B cell (primary cell): ENCODE measurements at regions of chr14 and their contacts with region 1.

Region 1: DNA sequence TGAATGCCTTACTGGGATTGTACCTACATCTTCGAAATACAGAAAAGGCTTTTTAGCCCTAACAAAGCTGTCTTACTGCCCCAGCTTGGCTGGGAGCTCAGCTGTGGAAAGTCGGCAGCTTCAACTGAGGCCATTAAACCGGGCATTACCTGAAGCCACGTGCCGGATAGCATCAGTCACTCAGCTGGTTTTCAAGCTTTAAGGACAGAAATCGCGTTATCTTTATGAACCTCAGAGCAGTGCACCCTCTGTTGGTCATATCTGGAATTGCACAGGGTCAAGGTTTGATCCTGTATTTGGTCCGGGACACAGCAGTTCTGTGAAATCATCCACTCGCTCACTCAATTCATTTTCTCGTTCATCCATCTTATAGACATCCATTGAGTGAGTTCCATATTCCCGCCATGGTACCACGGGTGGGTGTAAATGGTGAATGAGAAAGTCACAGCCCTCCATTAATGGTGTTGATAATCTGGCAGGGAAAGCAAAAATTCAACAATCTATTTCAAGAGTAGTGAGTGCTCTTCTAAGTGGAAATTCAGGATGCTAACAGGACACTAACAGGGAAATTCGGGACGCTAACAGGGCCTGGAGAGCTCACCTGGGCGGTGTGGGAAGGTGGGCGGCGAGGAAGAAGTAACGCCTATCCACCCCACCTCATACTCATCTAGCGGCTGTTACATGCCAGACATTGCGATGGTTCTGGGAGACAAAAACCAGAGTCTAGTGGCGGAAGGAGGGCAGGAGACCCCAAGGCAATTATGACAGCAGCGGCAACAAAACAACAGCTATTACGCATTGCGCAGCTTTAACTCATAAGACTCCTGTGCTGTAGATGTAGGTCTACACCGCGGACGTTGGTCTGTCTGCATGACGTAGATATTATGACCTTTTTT is 60.6 kb upstream of the TCL1A start:
- DNase-seq: peak; percentile 78
- ATAC-seq: peak; percentile 68
- H3K4me3 ChIP-seq: no peak overlapping the region
- H3K4me3 Mint-ChIP-seq: no peak overlapping the region
- H3K27ac ChIP-seq: no peak overlapping the region
- H3K27ac Mint-ChIP-seq: no peak overlapping the region
- H3K4me1 ChIP-seq: peaks cover 7 to 16% of the 10 kb centered on the region in 2 donors
- H3K4me1 Mint-ChIP-seq: peaks cover 24% of the 10 kb centered on the region
- H3K27me3 ChIP-seq: no peaks in the 10 kb centered on the region
- H3K27me3 Mint-ChIP-seq: peaks cover 10% of the 10 kb centered on the region
- CTCF ChIP-seq: peak; percentile 95

Region 2: DNA sequence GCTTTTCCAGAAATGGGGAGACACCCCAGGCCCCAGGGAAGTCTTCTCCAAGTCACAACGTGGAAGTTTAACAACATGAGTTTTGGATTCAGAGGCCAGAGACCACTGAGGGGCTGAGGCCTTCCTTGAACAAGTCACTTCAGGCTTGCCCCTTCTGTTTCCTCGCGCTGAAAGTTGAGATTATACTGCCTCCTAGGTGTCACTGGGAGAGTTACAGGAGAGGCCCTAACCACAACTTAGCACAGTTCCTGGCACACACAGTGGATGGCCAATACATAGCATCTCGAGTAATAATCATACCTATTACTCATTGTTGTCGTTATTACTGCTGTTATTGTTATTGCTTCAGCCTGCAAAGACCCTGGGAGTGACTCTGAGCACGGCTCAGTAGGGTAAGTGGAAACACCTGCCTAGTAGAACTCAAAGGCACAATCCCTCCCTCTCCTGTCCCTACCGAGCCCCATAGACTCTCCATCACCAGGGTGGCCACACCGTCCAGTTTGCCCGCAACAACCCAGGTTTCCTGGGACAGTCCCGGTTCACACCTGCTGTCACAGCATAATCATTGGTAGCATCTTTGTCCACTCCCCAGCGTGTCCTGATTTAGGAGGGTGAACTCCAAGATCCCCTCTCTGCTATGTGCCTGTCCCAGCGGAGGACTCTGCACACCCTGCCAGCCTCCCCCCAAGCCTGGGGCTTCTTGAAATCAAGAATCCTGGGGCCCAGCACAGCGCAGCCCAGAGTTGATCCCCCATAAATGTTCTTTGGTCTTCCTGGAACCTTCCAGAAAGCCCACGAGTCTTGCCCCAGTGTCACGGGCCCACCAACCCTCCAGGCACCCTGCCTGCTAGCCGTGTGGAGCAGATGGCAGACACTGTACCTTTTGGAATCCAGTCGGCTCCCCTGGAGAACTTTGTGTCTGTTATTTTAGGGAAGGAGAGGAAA is 343.0 kb before region 1 on chr14:
- CTCF ChIA-PET with region 1: interaction called, 15 read pairs
- POLR2A ChIA-PET with region 1: no interaction called
- intact Hi-C with region 1: loop called (anchors 1 kb)
- DNase-seq: peak; percentile 48
- ATAC-seq: no peak
- H3K4me3 ChIP-seq: no peak overlapping the region
- H3K4me3 Mint-ChIP-seq: no peak overlapping the region
- H3K27ac ChIP-seq: no peak overlapping the region
- H3K27ac Mint-ChIP-seq: no peak overlapping the region
- H3K4me1 ChIP-seq: peaks cover 0 to 3% of the 10 kb centered on the region in 2 donors
- H3K4me1 Mint-ChIP-seq: peaks cover 7% of the 10 kb centered on the region
- H3K27me3 ChIP-seq: no peaks in the 10 kb centered on the region
- H3K27me3 Mint-ChIP-seq: no peaks in the 10 kb centered on the region
- CTCF ChIP-seq: peak; percentile 53

Region 3: GRCh38 chr14:95483309-95484165 is 291.0 kb before region 1 on chr14:
- CTCF ChIA-PET with region 1: no interaction called
- POLR2A ChIA-PET with region 1: no interaction called
- intact Hi-C with region 1: no loop called
- DNase-seq: no peak
- ATAC-seq: no peak
- H3K4me3 ChIP-seq: no peak overlapping the region
- H3K4me3 Mint-ChIP-seq: no peak overlapping the region
- H3K27ac ChIP-seq: no peak overlapping the region
- H3K27ac Mint-ChIP-seq: peak overlapping the region; percentile 59
- H3K4me1 ChIP-seq: peaks cover 64 to 87% of the 10 kb centered on the region in 2 donors
- H3K4me1 Mint-ChIP-seq: peaks cover 80% of the 10 kb centered on the region
- H3K27me3 ChIP-seq: no peaks in the 10 kb centered on the region
- H3K27me3 Mint-ChIP-seq: no peaks in the 10 kb centered on the region
- CTCF ChIP-seq: no peak

Region 4: GRCh38 chr14:95609387-95609990 is 165.0 kb before region 1 on chr14:
- CTCF ChIA-PET with region 1: interaction called, 72 read pairs
- POLR2A ChIA-PET with region 1: interaction called, 3 read pairs
- intact Hi-C with region 1: loop called (anchors 1 kb)
- DNase-seq: peak; percentile 52
- ATAC-seq: no peak
- H3K4me3 ChIP-seq: no peak overlapping the region
- H3K4me3 Mint-ChIP-seq: no peak overlapping the region
- H3K27ac ChIP-seq: no peak overlapping the region
- H3K27ac Mint-ChIP-seq: no peak overlapping the region
- H3K4me1 ChIP-seq: peaks cover 13 to 29% of the 10 kb centered on the region in 2 donors
- H3K4me1 Mint-ChIP-seq: peaks cover 31% of the 10 kb centered on the region
- H3K27me3 ChIP-seq: peaks cover 0 to 10% (median 3%) of the 10 kb centered on the region in 4 experiments
- H3K27me3 Mint-ChIP-seq: peaks cover 45% of the 10 kb centered on the region
- CTCF ChIP-seq: peak; percentile 51

Region 5: GRCh38 chr14:95697764-95698163 is 76.7 kb before region 1 on chr14:
- CTCF ChIA-PET with region 1: interaction called, 15 read pairs
- POLR2A ChIA-PET with region 1: no interaction called
- intact Hi-C with region 1: no loop called
- DNase-seq: peak; percentile 76
- ATAC-seq: peak; percentile 64
- H3K4me3 ChIP-seq: peak overlapping the region in 3 of 5 experiments; percentile 9 to 56 (median 16)
- H3K4me3 Mint-ChIP-seq: peak overlapping the region; percentile 81
- H3K27ac ChIP-seq: peak overlapping the region; percentile 87 to 94
- H3K27ac Mint-ChIP-seq: peak overlapping the region; percentile 95
- H3K4me1 ChIP-seq: peaks cover 100% of the 10 kb centered on the region in 2 donors
- H3K4me1 Mint-ChIP-seq: peaks cover 83% of the 10 kb centered on the region
- H3K27me3 ChIP-seq: no peaks in the 10 kb centered on the region
- H3K27me3 Mint-ChIP-seq: peaks cover 34% of the 10 kb centered on the region
- CTCF ChIP-seq: peak; percentile 19

Region 6: DNA sequence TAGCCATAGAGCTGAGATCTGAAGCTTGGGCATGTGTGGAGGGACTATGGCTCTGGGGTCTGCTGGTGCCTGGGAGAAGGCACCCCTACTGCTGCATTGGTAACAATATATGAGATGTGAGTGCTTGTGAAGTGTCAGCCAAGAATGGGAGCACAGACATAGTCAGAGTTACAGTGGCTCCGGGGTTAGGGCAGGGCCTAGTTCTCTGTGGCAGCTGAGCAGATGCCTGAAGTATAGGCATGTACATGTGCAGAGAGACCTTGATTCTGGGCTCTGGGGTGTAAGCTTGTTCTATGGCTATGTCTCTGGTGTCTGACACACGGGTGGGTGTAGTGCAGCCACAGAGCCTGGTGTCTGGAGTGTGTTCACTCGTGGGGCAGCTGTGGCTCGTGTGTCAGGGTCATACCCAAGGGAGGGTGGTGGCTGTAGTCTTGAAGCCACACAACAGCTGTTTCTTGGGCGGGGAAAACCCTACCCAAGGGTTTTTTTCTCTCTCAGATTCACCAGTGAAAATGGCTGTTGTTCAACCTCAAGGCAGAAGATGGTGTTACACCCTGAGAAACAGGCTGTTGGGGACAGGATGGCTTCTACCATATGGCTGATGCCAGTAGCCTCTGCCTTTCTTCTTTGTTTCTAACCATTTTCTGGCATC is 48.7 kb before region 1 on chr14:
- CTCF ChIA-PET with region 1: interaction called, 33 read pairs
- POLR2A ChIA-PET with region 1: no interaction called
- intact Hi-C with region 1: loop called (anchors 1 kb)
- DNase-seq: peak; percentile 78
- ATAC-seq: peak; percentile 91
- H3K4me3 ChIP-seq: peak overlapping the region in 4 of 5 experiments; percentile 3 to 45 (median 32)
- H3K4me3 Mint-ChIP-seq: peak overlapping the region; percentile 68
- H3K27ac ChIP-seq: peak overlapping the region; percentile 59 to 74
- H3K27ac Mint-ChIP-seq: peak overlapping the region; percentile 90
- H3K4me1 ChIP-seq: peaks cover 66 to 69% of the 10 kb centered on the region in 2 donors
- H3K4me1 Mint-ChIP-seq: peaks cover 67% of the 10 kb centered on the region
- H3K27me3 ChIP-seq: no peaks in the 10 kb centered on the region
- H3K27me3 Mint-ChIP-seq: peaks cover 30% of the 10 kb centered on the region
- CTCF ChIP-seq: no peak

Region 7: DNA sequence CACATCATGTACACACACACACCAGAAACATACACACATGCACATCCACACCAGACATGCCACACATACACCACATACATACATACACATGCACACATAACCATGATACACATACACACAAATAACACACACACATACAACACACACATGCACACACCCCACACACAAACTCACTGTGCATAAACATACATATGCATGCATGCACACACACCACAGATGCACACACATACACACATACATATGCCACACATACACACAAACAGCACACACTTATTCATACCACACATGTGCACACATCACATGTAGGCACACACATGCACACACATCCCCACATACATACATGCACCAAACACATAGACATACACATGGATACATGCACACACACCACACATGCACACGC is 197.7 kb after region 1 on chr14:
- CTCF ChIA-PET with region 1: no interaction called
- POLR2A ChIA-PET with region 1: no interaction called
- intact Hi-C with region 1: no loop called
- DNase-seq: no peak
- ATAC-seq: no peak
- H3K4me3 ChIP-seq: no peak overlapping the region
- H3K4me3 Mint-ChIP-seq: no peak overlapping the region
- H3K27ac ChIP-seq: no peak overlapping the region
- H3K27ac Mint-ChIP-seq: no peak overlapping the region
- H3K4me1 ChIP-seq: no peaks in the 10 kb centered on the region
- H3K4me1 Mint-ChIP-seq: no peaks in the 10 kb centered on the region
- H3K27me3 ChIP-seq: peaks cover 0 to 3% (median 0%) of the 10 kb centered on the region in 4 experiments
- H3K27me3 Mint-ChIP-seq: peaks cover 32% of the 10 kb centered on the region
- CTCF ChIP-seq: no peak

Region 8: GRCh38 chr14:95993768-95994592 is 219.5 kb after region 1 on chr14:
- CTCF ChIA-PET with region 1: interaction called, 12 read pairs
- POLR2A ChIA-PET with region 1: no interaction called
- intact Hi-C with region 1: loop called (anchors 2 kb)
- DNase-seq: peak; percentile 72
- ATAC-seq: no peak
- H3K4me3 ChIP-seq: no peak overlapping the region
- H3K4me3 Mint-ChIP-seq: no peak overlapping the region
- H3K27ac ChIP-seq: no peak overlapping the region
- H3K27ac Mint-ChIP-seq: no peak overlapping the region
- H3K4me1 ChIP-seq: peaks cover 3% of the 10 kb centered on the region in 2 donors
- H3K4me1 Mint-ChIP-seq: no peaks in the 10 kb centered on the region
- H3K27me3 ChIP-seq: peaks cover 0 to 24% (median 13%) of the 10 kb centered on the region in 4 experiments
- H3K27me3 Mint-ChIP-seq: peaks cover 42% of the 10 kb centered on the region
- CTCF ChIP-seq: peak; percentile 95